ENCODE measurements at regions of chr19 and their contacts with region 1.

Region 1: GRCh38 chr19:12938234-12939025 is at the start of gene CALR:
- DNase-seq: peak; percentile 99
- H3K4me3 ChIP-seq: peak within 1 kb of the TSS; percentile 100
- H3K4me3 Mint-ChIP-seq: peak within 1 kb of the TSS; percentile 97
- H3K27ac Mint-ChIP-seq: peak within 1 kb of the TSS; percentile 97
- H3K4me1 ChIP-seq: peaks cover 23% of the 10 kb centered on the region; the same call in 1 of the 2 replicates
- H3K4me1 Mint-ChIP-seq: peaks cover 13% of the 10 kb centered on the region
- H3K27me3 ChIP-seq: no peaks in the 10 kb centered on the region
- H3K27me3 Mint-ChIP-seq: peaks cover 3% of the 10 kb centered on the region
- CTCF ChIP-seq: peak in 1 of 2 experiments; percentile 23
- total RNA-seq, gene CALR: 707 and 767 TPM in 2 replicates

Region 2: DNA sequence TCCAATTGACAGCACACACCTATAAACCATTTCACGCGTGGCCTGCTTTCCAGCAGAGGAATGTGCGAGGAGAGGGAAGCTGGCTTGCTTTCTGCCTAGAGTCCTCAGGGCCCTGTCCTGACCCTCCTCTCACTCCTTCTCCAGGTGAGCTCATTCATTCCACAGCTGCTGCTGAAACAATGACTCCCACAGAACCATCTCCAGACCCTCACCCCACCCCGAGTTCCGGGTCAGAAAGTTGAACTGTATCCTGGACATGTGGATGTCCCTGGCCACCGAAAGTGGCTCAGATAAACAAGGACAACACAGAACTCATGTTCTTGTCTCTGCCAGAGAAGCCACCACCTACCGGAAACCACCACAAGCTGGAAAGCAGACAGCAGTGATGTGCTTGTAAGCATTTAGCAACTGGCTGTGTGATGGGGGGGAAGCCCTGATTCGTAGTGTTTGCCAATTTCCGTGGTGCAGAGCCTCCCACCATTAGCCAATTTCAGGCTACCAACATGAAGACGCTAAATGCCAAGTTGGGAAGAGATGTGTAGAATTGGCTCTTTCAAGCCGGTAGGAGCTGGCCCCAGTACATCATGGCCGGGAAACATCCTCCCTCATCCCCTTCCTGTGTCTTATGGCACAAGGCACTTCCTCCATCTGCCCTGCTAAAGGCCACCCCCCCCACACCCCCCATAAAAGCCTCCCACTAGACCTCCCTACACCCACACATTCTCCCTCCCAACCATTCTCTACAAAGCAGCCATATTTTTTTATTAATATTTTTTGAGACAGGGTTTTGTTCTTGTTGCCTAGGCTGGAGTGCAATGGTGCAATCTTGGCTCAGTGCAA is 24.4 kb before region 1 on chr19:
- CTCF ChIA-PET with region 1: no interaction called
- POLR2A ChIA-PET with region 1: interaction called, 5 read pairs
- intact Hi-C with region 1: loop called (anchors 1 kb)
- DNase-seq: no peak
- H3K4me3 ChIP-seq: no peak overlapping the region
- H3K4me3 Mint-ChIP-seq: no peak overlapping the region
- H3K27ac Mint-ChIP-seq: no peak overlapping the region
- H3K4me1 ChIP-seq: no peaks in the 10 kb centered on the region
- H3K4me1 Mint-ChIP-seq: no peaks in the 10 kb centered on the region
- H3K27me3 ChIP-seq: no peaks in the 10 kb centered on the region
- H3K27me3 Mint-ChIP-seq: no peaks in the 10 kb centered on the region
- CTCF ChIP-seq: no peak

Region 3: GRCh38 chr19:13022859-13023636 is 84.6 kb after region 1 on chr19:
- CTCF ChIA-PET with region 1: no interaction called
- POLR2A ChIA-PET with region 1: no interaction called
- intact Hi-C with region 1: no loop called
- DNase-seq: no peak
- H3K4me3 ChIP-seq: no peak overlapping the region
- H3K4me3 Mint-ChIP-seq: no peak overlapping the region
- H3K27ac Mint-ChIP-seq: no peak overlapping the region
- H3K4me1 ChIP-seq: peaks cover 6% of the 10 kb centered on the region
- H3K4me1 Mint-ChIP-seq: peaks cover 9% of the 10 kb centered on the region
- H3K27me3 ChIP-seq: no peaks in the 10 kb centered on the region
- H3K27me3 Mint-ChIP-seq: peaks cover 21% of the 10 kb centered on the region
- CTCF ChIP-seq: no peak

Measured in Caco-2 (cell line).